ENCODE measurements at regions of chr12 and their contacts with region 1.

Region 1: DNA sequence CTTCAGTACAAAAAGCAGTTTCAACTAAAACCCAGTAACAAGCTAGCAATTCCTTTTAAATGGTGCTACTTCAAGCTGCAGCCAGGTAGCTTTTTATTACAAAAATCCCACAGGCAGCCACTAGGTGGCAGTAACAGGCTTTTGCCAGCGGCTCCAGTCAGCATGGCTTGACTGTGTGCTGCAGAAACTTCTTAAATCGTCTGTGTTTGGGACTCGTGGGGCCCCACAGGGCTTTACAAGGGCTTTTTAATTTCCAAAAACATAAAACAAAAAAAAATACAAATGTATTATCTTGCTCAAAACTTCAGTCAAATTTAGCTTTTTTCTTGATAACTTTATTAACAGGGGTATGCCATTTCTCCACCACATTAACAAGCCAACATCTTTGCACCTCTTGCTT is 3.6 kb upstream of the CLEC4E start:
- DNase-seq: peak; percentile 40
- ATAC-seq: peak; percentile 93
- H3K4me3 ChIP-seq: no peak overlapping the region
- H3K27ac ChIP-seq: no peak overlapping the region
- H3K4me1 ChIP-seq: no peaks in the 10 kb centered on the region
- H3K27me3 ChIP-seq: no peaks in the 10 kb centered on the region
- CTCF ChIP-seq: peak; percentile 74 to 87 (median 86)
- EP300 ChIP-seq: no peak
- POLR2A ChIP-seq: no peak
- RAD21 ChIP-seq: peak; percentile 93

Region 2: DNA sequence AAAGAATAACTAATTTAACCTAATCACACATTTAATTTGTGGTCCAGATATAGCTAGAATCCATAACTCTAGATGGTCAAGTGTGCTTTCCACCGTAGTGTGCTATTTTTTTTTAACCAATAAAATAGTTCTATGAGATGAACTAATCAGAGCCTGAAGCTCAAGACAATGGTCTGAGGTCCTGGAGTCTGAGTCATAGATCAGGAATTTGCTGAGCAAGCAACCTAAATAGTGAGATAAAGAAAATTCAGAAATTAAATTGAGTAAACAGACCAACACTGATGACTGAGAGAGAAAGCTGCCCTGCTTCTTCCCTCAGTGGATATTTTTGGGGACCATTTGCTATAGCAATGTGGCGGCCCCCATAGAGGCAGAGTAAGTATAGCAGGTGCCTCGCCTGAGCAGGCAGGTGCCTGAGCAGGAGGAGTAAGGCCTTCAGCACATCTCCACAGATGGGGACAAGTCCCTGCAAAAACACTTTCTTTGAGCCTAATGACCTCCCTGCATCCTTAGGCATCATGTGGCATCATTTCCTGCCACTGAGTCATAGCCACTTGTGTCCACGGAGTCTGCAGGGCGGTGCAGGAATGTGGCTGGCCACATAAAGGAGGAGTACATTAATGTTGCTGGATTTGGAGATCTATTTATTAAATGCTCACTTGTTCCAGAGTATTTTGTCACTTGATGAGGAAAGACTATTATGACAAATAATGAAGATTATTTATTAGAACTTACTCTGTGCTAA is 10.3 kb after region 1 on chr12:
- CTCF ChIA-PET with region 1: interaction called, 16 read pairs
- POLR2A ChIA-PET with region 1: interaction called, 3 read pairs
- RAD21 ChIA-PET with region 1: no interaction called
- SMC1A ChIA-PET with region 1: interaction called, 8 read pairs
- in situ Hi-C with region 1: no loop called
- intact Hi-C with region 1: no loop called
- DNase-seq: no peak
- ATAC-seq: no peak
- H3K4me3 ChIP-seq: no peak overlapping the region
- H3K27ac ChIP-seq: no peak overlapping the region
- H3K4me1 ChIP-seq: no peaks in the 10 kb centered on the region
- H3K27me3 ChIP-seq: no peaks in the 10 kb centered on the region
- CTCF ChIP-seq: no peak
- EP300 ChIP-seq: no peak
- POLR2A ChIP-seq: no peak
- RAD21 ChIP-seq: no peak

Region 3: GRCh38 chr12:8609061-8609570 is 64.8 kb after region 1 on chr12:
- CTCF ChIA-PET with region 1: interaction called, 148 read pairs
- POLR2A ChIA-PET with region 1: interaction called, 4 read pairs
- RAD21 ChIA-PET with region 1: interaction called, 47 read pairs
- SMC1A ChIA-PET with region 1: interaction called, 89 read pairs
- in situ Hi-C with region 1: no loop called
- intact Hi-C with region 1: loop called (anchors 2 kb)
- DNase-seq: no peak
- ATAC-seq: peak; percentile 16
- H3K4me3 ChIP-seq: peak overlapping the region; percentile 51
- H3K27ac ChIP-seq: peak overlapping the region; percentile 39
- H3K4me1 ChIP-seq: peaks cover 30% of the 10 kb centered on the region
- H3K27me3 ChIP-seq: no peaks in the 10 kb centered on the region
- CTCF ChIP-seq: peak; percentile 71 to 86 (median 86)
- EP300 ChIP-seq: no peak
- POLR2A ChIP-seq: peak; percentile 51; the same call in 1 of the 2 replicates
- RAD21 ChIP-seq: peak; percentile 75

Region 4: DNA sequence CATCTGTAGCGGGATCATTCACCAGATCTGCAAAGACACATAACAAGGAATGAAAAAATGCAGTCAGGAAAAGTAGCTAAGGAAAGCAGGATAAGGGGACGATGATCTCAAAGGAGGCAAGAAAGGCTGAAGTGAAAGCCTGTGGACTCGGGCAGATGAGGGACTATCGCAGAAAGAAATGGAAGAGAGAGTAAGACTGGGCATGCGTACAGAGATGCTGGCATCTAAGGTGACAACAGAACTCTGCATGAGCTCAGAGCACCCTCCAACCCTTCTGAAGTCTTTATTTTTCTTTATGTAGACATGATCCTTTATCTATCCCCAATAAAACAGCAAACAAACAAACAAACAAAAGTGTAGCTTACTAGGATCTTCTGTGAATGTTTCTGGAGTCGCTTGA is 111.1 kb after region 1 on chr12:
- CTCF ChIA-PET with region 1: interaction called, 46 read pairs
- POLR2A ChIA-PET with region 1: no interaction called
- RAD21 ChIA-PET with region 1: interaction called, 29 read pairs
- SMC1A ChIA-PET with region 1: interaction called, 30 read pairs
- in situ Hi-C with region 1: no loop called
- intact Hi-C with region 1: loop called (anchors 2 kb)
- DNase-seq: no peak
- ATAC-seq: no peak
- H3K4me3 ChIP-seq: no peak overlapping the region
- H3K27ac ChIP-seq: no peak overlapping the region
- H3K4me1 ChIP-seq: no peaks in the 10 kb centered on the region
- H3K27me3 ChIP-seq: no peaks in the 10 kb centered on the region
- CTCF ChIP-seq: no peak
- EP300 ChIP-seq: no peak
- POLR2A ChIP-seq: no peak
- RAD21 ChIP-seq: no peak

Region 5: DNA sequence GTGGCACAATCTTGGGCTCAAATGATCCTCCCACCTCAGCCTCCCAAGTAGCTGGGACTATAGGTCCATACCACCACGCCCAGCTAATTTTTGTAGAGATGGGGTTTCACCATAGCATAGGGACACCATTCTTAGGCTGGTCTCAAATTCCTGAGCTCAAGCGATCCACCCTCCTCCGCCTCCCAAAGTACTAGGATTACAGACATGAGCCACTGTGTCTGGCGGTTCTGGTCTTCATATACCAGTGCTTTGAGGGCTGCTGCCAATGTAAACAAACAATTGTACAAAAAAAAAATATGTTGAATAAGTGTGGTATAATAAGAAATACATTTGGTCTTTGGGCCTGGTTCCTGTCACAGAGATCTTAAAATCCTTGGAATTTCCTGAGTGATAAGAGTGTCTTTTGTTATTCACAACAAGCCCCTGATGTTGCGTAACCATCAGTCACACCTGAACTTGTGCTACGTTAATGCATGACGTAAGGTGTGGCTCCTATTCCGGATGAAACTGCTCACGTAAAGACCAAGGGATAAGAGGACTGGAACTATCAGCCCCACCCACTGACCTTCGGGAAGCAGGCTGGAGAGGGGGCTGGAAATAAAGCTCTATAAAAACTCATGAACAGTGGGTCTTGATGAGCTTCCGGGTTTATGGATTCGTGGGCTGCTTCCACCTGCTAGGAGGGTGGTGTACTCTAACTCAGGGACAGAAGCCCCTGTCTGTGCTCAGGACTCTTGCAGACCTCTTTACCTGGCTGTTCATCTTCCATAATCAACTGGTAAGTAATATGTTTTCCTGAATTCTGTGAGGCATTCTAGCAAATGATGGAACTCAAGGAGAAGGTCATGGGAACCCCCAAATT is 137.0 kb after region 1 on chr12:
- CTCF ChIA-PET with region 1: interaction called, 41 read pairs
- POLR2A ChIA-PET with region 1: no interaction called
- RAD21 ChIA-PET with region 1: interaction called, 11 read pairs
- SMC1A ChIA-PET with region 1: interaction called, 15 read pairs
- in situ Hi-C with region 1: no loop called
- intact Hi-C with region 1: loop called (anchors 10 kb)
- DNase-seq: no peak
- ATAC-seq: no peak
- H3K4me3 ChIP-seq: no peak overlapping the region
- H3K27ac ChIP-seq: no peak overlapping the region
- H3K4me1 ChIP-seq: no peaks in the 10 kb centered on the region
- H3K27me3 ChIP-seq: no peaks in the 10 kb centered on the region
- CTCF ChIP-seq: no peak
- EP300 ChIP-seq: no peak
- POLR2A ChIP-seq: no peak
- RAD21 ChIP-seq: no peak

Region 6: GRCh38 chr12:8823565-8824300 is 279.4 kb after region 1 on chr12:
- CTCF ChIA-PET with region 1: interaction called, 11 read pairs
- POLR2A ChIA-PET with region 1: no interaction called
- RAD21 ChIA-PET with region 1: interaction called, 3 read pairs
- SMC1A ChIA-PET with region 1: no interaction called
- in situ Hi-C with region 1: no loop called
- intact Hi-C with region 1: loop called (anchors 5 kb)
- DNase-seq: no peak
- ATAC-seq: no peak
- H3K4me3 ChIP-seq: no peak overlapping the region
- H3K27ac ChIP-seq: no peak overlapping the region
- H3K4me1 ChIP-seq: no peaks in the 10 kb centered on the region
- H3K27me3 ChIP-seq: 0 out of 4 replicates have a peak, but pooled peaks cover 0 to 3% of the 10 kb centered on the region in 2 experiments
- CTCF ChIP-seq: peak; percentile 3 to 32 (median 19); a peak in 2 of 6 replicates
- EP300 ChIP-seq: no peak
- POLR2A ChIP-seq: no peak
- RAD21 ChIP-seq: peak; percentile 70

Region 7: GRCh38 chr12:9039397-9039977 is 495.2 kb after region 1 on chr12:
- CTCF ChIA-PET with region 1: interaction called, 10 read pairs
- POLR2A ChIA-PET with region 1: no interaction called
- RAD21 ChIA-PET with region 1: interaction called, 4 read pairs
- SMC1A ChIA-PET with region 1: interaction called, 5 read pairs
- in situ Hi-C with region 1: no loop called
- intact Hi-C with region 1: loop called (anchors 10 kb)
- DNase-seq: no peak
- ATAC-seq: peak; percentile 78
- H3K4me3 ChIP-seq: no peak overlapping the region
- H3K27ac ChIP-seq: no peak overlapping the region
- H3K4me1 ChIP-seq: no peaks in the 10 kb centered on the region
- H3K27me3 ChIP-seq: no peaks in the 10 kb centered on the region
- CTCF ChIP-seq: peak; percentile 64 to 79 (median 74)
- EP300 ChIP-seq: no peak
- POLR2A ChIP-seq: no peak
- RAD21 ChIP-seq: peak; percentile 87